ENCODE measurements at regions of chr2 and their contacts with region 1.

Region 1: GRCh38 chr2:112726497-112727190 is 5.8 kb downstream of the NT5DC4 start:
- DNase-seq: peak; percentile 92
- H3K4me3 ChIP-seq: no peak overlapping the region; a peak in 1 of 4 replicates
- H3K27ac ChIP-seq: no peak overlapping the region
- H3K4me1 ChIP-seq: peaks cover 0 to 6% of the 10 kb centered on the region in 2 experiments; a peak in 1 of 4 replicates
- H3K27me3 ChIP-seq: no peaks in the 10 kb centered on the region
- CTCF ChIP-seq: peak; percentile 95
- EP300 ChIP-seq: no peak
- RAD21 ChIP-seq: peak; percentile 96

Region 2: DNA sequence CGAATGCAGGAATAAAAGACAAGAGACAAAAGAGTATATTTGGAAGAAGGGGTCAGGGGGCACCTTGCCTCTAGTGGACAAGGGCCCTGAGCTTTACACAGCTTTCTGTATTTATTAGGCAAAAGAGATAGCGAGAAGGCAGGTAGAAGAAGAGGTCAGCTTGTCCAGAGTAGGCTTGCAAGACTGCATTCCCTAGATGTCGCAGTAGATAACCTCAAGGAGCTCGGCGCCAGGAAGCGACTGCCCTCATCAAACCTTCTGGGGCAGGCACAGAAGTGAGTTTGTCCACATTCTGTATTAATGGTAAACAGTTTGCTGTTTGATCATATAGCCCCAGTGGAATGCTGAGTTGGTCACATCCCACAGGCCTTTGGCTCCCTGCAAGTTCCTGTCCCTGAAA is 135.3 kb before region 1 on chr2:
- CTCF ChIA-PET with region 1: interaction called, 149 read pairs
- POLR2A ChIA-PET with region 1: no interaction called
- DNase-seq: no peak
- H3K4me3 ChIP-seq: no peak overlapping the region
- H3K27ac ChIP-seq: no peak overlapping the region
- H3K4me1 ChIP-seq: peaks cover 0 to 6% of the 10 kb centered on the region in 2 experiments; a peak in 1 of 4 replicates
- H3K27me3 ChIP-seq: no peaks in the 10 kb centered on the region
- CTCF ChIP-seq: no peak
- EP300 ChIP-seq: no peak
- RAD21 ChIP-seq: no peak

Region 3: DNA sequence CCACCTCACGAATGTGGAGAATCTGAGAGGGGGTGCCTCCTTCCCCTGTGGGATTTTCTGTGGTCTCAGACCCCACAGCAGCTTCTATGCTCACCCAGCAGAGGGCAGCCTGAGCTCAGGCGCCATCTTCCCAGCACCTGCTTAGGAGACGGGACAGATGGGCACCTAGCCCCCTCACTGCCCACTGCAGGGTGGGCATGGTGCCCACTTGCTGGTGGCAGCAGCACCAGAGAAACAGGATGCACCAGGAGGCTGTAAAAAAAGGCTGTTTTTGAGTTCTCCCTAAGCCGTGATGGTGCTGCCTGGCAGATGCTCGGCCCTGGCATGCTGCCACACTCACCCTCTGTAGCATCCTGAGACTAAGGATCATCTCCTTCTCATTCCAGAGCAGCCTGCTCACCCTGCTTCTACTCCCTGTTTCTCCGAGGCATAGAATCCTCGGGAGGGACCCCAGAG is 100.0 kb before region 1 on chr2:
- CTCF ChIA-PET with region 1: interaction called, 179 read pairs
- POLR2A ChIA-PET with region 1: interaction called, 3 read pairs
- DNase-seq: peak; percentile 79
- H3K4me3 ChIP-seq: peak overlapping the region; percentile 37 to 57
- H3K27ac ChIP-seq: peak overlapping the region; percentile 62 to 94
- H3K4me1 ChIP-seq: peaks cover 21 to 49% of the 10 kb centered on the region in 2 experiments; a peak in 3 of 4 replicates
- H3K27me3 ChIP-seq: no peaks in the 10 kb centered on the region
- CTCF ChIP-seq: peak; percentile 95
- EP300 ChIP-seq: peak in 1 of 2 experiments; percentile 37; a peak in 1 of 4 replicates
- RAD21 ChIP-seq: peak; percentile 82

Region 4: DNA sequence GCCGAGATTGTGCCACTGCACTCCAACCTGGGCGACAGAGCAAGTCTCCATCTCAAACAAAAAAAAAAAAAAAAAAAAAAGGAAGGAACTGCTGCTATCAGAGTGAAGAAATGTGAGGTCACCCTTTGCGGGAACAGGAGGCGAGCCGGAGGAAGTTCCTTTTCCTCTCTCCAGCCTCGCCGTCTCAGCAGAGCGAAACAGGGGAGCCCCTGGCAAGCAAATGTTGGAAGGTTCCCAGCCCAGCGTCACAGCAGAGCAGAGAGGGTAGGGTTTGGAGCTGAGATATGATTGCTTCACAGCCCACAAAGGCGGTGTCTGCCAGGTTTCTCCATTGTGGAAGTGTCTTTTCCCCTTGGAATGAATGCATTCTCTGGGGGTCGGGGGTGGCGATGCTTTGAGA is 52.4 kb before region 1 on chr2:
- CTCF ChIA-PET with region 1: interaction called, 13 read pairs
- POLR2A ChIA-PET with region 1: no interaction called
- DNase-seq: no peak
- H3K4me3 ChIP-seq: no peak overlapping the region
- H3K27ac ChIP-seq: no peak overlapping the region
- H3K4me1 ChIP-seq: no peaks in the 10 kb centered on the region
- H3K27me3 ChIP-seq: no peaks in the 10 kb centered on the region
- CTCF ChIP-seq: no peak
- EP300 ChIP-seq: no peak
- RAD21 ChIP-seq: no peak

Region 5: DNA sequence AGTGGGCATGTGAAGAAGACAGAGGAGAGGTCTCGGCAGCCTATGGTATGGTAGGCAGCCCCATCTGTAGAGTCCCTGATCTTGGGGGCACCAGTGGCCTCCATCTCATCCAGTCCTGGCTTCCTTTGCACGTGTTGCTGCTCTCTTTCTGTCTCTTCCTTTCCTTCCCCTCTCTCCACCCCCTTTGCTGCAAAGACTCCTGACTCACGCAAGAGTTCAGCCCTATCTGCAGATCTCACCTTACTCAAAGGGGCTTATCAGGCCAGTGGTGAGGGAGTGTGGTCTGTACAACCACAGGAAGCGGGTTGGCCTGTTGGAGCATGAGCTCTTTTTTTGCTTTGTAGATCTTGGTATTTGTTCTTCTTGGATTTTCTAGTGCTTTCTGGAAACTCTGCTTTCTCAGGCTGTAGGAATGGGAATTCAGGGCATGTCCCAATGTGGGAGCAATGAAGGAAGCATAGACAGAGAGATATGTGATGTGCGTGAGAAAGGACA is 20.4 kb before region 1 on chr2:
- CTCF ChIA-PET with region 1: interaction called, 22 read pairs
- POLR2A ChIA-PET with region 1: no interaction called
- DNase-seq: no peak
- H3K4me3 ChIP-seq: no peak overlapping the region
- H3K27ac ChIP-seq: no peak overlapping the region
- H3K4me1 ChIP-seq: no peaks in the 10 kb centered on the region
- H3K27me3 ChIP-seq: no peaks in the 10 kb centered on the region
- CTCF ChIP-seq: no peak
- EP300 ChIP-seq: no peak
- RAD21 ChIP-seq: no peak

Region 6: DNA sequence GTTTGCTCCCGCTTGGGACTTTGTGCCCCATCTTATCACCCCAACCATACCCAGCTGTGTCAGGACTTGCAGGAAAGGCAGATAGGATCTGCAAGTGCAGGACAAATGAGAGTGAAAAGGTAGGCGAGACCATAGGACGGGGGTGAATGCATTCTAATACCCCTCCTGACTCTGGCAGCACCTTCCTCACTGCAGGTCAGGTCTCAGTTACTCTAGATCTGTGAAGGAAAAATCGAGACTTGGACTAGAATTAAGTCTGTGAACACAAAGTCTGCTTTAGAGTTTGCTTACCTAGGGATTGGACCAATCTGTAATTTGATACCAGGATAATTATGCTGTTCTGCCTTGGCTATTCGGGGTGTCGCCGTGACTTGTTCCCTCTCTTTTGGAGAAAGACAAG is 13.9 kb after region 1 on chr2:
- CTCF ChIA-PET with region 1: interaction called, 47 read pairs
- POLR2A ChIA-PET with region 1: no interaction called
- DNase-seq: no peak
- H3K4me3 ChIP-seq: no peak overlapping the region
- H3K27ac ChIP-seq: no peak overlapping the region
- H3K4me1 ChIP-seq: no peaks in the 10 kb centered on the region
- H3K27me3 ChIP-seq: no peaks in the 10 kb centered on the region
- CTCF ChIP-seq: no peak
- EP300 ChIP-seq: no peak
- RAD21 ChIP-seq: no peak

Region 7: DNA sequence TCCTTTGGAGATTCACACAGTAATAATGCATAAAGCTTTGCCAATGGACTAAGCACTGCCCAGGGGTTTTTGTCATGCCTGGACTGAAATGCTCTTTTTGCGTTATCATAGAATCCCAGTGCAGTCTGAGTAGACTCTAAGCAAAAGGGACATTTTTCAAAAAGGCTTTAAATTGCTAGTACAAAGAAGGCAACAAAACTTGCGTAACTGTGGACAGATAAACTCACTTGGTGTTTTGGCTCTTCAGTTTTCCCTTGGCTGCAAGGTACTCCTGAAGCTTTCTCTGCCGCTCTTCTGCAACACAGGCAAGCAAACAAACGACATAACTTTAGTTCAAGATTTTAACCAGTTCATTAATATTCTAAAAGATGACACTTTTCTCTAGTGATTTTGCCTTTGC is 35.6 kb after region 1 on chr2:
- CTCF ChIA-PET with region 1: no interaction called
- POLR2A ChIA-PET with region 1: no interaction called
- DNase-seq: no peak
- H3K4me3 ChIP-seq: no peak overlapping the region; a peak in 1 of 4 replicates
- H3K27ac ChIP-seq: no peak overlapping the region
- H3K4me1 ChIP-seq: peaks cover 11 to 15% of the 10 kb centered on the region in 2 experiments; a peak in 3 of 4 replicates
- H3K27me3 ChIP-seq: no peaks in the 10 kb centered on the region
- CTCF ChIP-seq: no peak
- EP300 ChIP-seq: no peak
- RAD21 ChIP-seq: no peak

Region 8: DNA sequence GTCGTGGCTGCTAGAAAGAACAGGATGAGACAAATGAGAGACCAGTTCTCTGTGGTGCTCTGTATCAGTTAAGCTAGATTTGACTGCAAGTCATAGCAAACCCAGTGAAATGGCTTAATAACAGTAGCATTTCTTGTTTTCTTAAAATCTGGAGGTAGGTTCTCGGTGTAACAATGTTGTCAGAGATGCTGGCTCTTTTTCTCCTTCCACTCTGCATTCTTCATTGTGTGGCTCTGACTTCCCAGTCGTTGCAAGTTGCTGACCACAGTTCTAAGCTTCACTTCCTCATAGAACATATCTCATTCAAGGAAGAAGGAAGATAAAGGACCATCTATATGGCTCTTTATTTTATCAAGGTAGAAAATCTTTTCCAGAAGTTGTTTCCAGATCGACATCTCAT is 45.7 kb after region 1 on chr2:
- CTCF ChIA-PET with region 1: no interaction called
- POLR2A ChIA-PET with region 1: no interaction called
- DNase-seq: no peak
- H3K4me3 ChIP-seq: no peak overlapping the region
- H3K27ac ChIP-seq: no peak overlapping the region
- H3K4me1 ChIP-seq: no peaks in the 10 kb centered on the region
- H3K27me3 ChIP-seq: no peaks in the 10 kb centered on the region
- CTCF ChIP-seq: no peak
- EP300 ChIP-seq: no peak
- RAD21 ChIP-seq: no peak

Region 9: DNA sequence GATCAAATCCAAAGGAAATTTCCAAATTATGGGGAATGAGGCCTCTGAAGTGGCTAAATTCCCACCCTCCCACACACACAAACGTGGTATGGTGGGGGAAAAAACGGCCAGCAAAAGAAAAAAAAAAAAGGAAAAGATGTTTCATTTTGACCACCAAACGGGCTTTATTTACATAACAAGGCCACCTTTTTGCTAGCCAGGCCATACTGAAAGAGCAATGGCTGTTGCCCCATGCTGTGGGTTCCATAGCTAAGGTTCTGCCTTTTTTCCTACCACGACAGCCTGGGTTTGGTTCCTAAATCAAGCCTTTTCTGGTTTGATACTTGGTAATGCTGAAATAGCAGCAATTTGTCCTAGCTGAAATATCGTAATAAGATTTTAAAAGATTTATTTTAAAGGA is 123.9 kb after region 1 on chr2:
- CTCF ChIA-PET with region 1: no interaction called
- POLR2A ChIA-PET with region 1: no interaction called
- DNase-seq: no peak
- H3K4me3 ChIP-seq: no peak overlapping the region
- H3K27ac ChIP-seq: no peak overlapping the region
- H3K4me1 ChIP-seq: no peaks in the 10 kb centered on the region
- H3K27me3 ChIP-seq: peaks cover 23% of the 10 kb centered on the region; the same call in 1 of the 2 replicates
- CTCF ChIP-seq: no peak
- EP300 ChIP-seq: no peak
- RAD21 ChIP-seq: no peak

Region 10: GRCh38 chr2:112941753-112942658 is 215.4 kb after region 1 on chr2:
- CTCF ChIA-PET with region 1: interaction called, 13 read pairs
- POLR2A ChIA-PET with region 1: no interaction called
- DNase-seq: peak; percentile 53
- H3K4me3 ChIP-seq: peak overlapping the region in 1 of 2 experiments; percentile 17; a peak in 1 of 4 replicates
- H3K27ac ChIP-seq: no peak overlapping the region
- H3K4me1 ChIP-seq: no peaks in the 10 kb centered on the region; a peak in 1 of 4 replicates
- H3K27me3 ChIP-seq: peaks cover 5% of the 10 kb centered on the region; the same call in 1 of the 2 replicates
- CTCF ChIP-seq: peak; percentile 88
- EP300 ChIP-seq: no peak
- RAD21 ChIP-seq: peak; percentile 82